ENCODE measurements at regions of chr15 and their contacts with region 1.

Region 1: DNA sequence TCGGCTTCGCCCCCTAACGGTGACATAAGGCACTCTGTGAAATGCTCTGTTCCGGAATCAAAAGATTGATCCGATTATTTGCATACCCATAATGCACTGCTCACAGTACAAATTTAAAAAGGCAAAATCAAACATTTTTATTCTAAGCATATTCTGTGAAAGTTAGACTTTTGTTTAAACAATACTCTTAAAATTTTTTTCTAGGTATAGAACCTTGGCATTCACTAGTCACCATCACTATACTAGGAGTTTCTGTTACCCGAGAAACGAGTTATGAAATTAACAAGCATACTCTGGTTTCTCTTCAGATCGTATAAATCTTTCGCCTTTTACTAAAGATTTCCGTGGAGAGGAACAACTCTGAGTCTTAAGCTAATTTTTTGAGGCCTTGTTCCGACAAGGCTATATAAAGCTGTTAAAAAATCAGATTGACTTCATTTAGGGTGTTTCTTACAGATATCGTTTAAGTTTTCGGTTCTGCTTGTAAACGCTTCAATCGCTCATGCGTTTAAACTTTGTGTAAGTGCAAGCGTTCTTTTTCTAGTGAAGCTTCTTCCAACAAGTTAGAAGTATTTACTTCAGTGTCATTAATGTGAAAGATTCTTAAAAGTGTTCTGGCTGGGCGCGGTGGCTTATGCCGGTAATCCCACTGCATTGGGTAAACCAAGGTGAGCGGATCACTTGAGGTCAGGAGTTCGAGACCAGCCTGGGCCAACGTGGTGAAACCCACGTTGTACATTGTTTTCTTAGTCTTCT is at the start of gene RNU5B-1:
- DNase-seq: peak; percentile 99
- ATAC-seq: peak; percentile 85
- H3K4me3 ChIP-seq: peak within 1 kb of the TSS; percentile 53 to 63
- H3K27ac ChIP-seq: peak within 1 kb of the TSS; percentile 98
- H3K4me1 ChIP-seq: peaks cover 16% of the 10 kb centered on the region
- H3K27me3 ChIP-seq: no peaks in the 10 kb centered on the region
- CTCF ChIP-seq: no peak
- total RNA-seq, gene RNU5B-1: not detected

Region 2: DNA sequence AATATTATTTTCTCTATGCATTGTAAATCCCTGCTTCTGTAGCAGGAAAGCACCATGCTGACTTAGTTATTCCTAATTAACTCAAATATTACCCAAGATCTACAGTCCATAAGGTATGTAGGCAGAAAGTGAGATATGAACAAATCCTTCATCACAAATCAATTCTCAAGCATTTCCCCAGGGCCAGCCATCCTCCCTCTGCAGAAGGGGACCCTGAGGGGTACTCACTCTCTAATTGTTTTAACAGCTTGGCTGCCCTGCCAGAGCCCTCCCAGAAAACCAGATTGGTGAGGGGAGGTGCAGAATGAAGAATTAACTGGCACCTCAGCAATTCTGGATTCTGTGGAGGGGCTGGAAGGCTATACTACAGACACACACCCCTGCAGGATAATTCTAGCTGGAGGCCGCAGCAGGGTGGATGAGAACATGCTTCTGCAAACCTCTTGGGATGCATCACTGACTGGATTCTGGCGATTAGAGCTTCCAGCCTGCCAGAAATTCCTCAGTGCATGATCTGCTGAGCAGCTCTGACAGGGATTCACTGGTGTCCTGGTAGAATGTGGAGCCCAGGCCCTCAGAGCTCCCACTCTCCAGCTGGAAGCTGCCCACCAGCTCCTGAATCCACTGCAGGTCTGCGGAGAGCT is 1382.2 kb before region 1 on chr15:
- CTCF ChIA-PET with region 1: no interaction called
- POLR2A ChIA-PET with region 1: no interaction called
- in situ Hi-C with region 1: no loop called
- intact Hi-C with region 1: no loop called
- DNase-seq: no peak
- ATAC-seq: no peak
- H3K4me3 ChIP-seq: no peak overlapping the region
- H3K27ac ChIP-seq: no peak overlapping the region
- H3K4me1 ChIP-seq: no peaks in the 10 kb centered on the region
- H3K27me3 ChIP-seq: no peaks in the 10 kb centered on the region
- CTCF ChIP-seq: no peak

Region 3: DNA sequence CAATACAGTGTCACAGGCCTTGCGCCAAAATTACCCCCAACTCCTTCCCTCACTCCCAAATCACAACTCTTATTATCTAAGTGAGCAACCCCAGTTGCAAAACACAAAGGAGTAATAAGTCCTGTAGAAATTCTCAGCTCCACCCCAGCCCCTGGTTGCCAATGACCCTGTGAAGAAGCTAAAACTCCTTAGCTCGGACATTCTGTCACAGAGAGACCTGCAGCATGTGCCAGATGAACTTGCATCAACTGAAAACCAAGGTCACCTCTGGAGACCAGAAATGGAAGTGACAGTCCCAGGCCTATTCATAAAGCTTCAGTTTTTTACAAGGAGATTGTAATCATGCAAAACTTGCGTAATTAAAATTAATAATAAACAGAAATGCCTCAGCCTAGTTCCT is 584.4 kb before region 1 on chr15:
- CTCF ChIA-PET with region 1: no interaction called
- POLR2A ChIA-PET with region 1: interaction called, 10 read pairs
- in situ Hi-C with region 1: no loop called
- intact Hi-C with region 1: no loop called
- DNase-seq: no peak
- ATAC-seq: no peak
- H3K4me3 ChIP-seq: no peak overlapping the region
- H3K27ac ChIP-seq: no peak overlapping the region
- H3K4me1 ChIP-seq: no peaks in the 10 kb centered on the region
- H3K27me3 ChIP-seq: no peaks in the 10 kb centered on the region
- CTCF ChIP-seq: no peak

Region 4: GRCh38 chr15:65049418-65049840 is 255.1 kb before region 1 on chr15:
- CTCF ChIA-PET with region 1: no interaction called
- POLR2A ChIA-PET with region 1: interaction called, 14 read pairs
- in situ Hi-C with region 1: no loop called
- intact Hi-C with region 1: no loop called
- DNase-seq: peak; percentile 65
- ATAC-seq: peak; percentile 98
- H3K4me3 ChIP-seq: peak overlapping the region; percentile 51 to 66
- H3K27ac ChIP-seq: no peak overlapping the region
- H3K4me1 ChIP-seq: peaks cover 7% of the 10 kb centered on the region
- H3K27me3 ChIP-seq: no peaks in the 10 kb centered on the region
- CTCF ChIP-seq: no peak

Region 5: GRCh38 chr15:65222891-65223290 is 81.7 kb before region 1 on chr15:
- CTCF ChIA-PET with region 1: no interaction called
- POLR2A ChIA-PET with region 1: no interaction called
- in situ Hi-C with region 1: no loop called
- intact Hi-C with region 1: no loop called
- DNase-seq: no peak
- ATAC-seq: no peak
- H3K4me3 ChIP-seq: no peak overlapping the region
- H3K27ac ChIP-seq: no peak overlapping the region
- H3K4me1 ChIP-seq: no peaks in the 10 kb centered on the region
- H3K27me3 ChIP-seq: no peaks in the 10 kb centered on the region
- CTCF ChIP-seq: no peak

Region 6: GRCh38 chr15:65244638-65245037 is 59.9 kb before region 1 on chr15:
- CTCF ChIA-PET with region 1: no interaction called
- POLR2A ChIA-PET with region 1: interaction called, 13 read pairs
- in situ Hi-C with region 1: no loop called
- intact Hi-C with region 1: no loop called
- DNase-seq: no peak
- ATAC-seq: no peak
- H3K4me3 ChIP-seq: no peak overlapping the region
- H3K27ac ChIP-seq: no peak overlapping the region
- H3K4me1 ChIP-seq: no peaks in the 10 kb centered on the region
- H3K27me3 ChIP-seq: no peaks in the 10 kb centered on the region
- CTCF ChIP-seq: no peak

Region 7: DNA sequence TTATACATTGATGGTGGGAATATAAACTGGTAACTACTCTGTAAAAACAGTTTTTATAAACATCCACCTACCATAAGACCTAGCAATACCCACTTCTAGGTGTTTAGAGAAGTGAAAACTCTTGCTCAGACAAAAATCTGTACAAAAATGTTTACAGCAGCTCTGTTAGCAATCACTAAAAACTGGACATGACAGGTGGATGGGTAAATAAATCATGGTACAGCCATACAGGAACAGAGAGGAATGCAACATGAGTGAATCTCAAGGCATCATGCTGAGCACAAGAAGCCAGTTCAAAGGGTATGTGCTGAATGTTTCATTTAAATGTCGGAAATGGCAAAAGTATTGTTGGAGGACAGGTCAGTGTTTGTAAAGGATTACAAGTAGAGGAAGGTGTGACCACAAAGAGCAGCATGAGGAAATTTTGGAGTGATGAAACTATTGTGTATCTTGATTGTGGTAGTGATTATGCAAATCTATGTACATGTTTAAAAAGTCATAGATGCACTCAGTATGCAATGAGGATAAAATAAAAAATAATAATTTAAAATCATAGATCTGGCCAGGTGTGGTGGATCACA is 11.5 kb before region 1 on chr15:
- CTCF ChIA-PET with region 1: interaction called, 4 read pairs
- POLR2A ChIA-PET with region 1: interaction called, 5 read pairs
- in situ Hi-C with region 1: no loop called
- intact Hi-C with region 1: loop called (anchors 1 kb)
- DNase-seq: no peak
- ATAC-seq: no peak
- H3K4me3 ChIP-seq: no peak overlapping the region
- H3K27ac ChIP-seq: no peak overlapping the region
- H3K4me1 ChIP-seq: peaks cover 3% of the 10 kb centered on the region; the same call in 1 of the 2 replicates
- H3K27me3 ChIP-seq: no peaks in the 10 kb centered on the region
- CTCF ChIP-seq: no peak

Measured in Panc1 (cell line).